ENCODE measurements at regions of chr5 and their contacts with region 1.

Region 1: DNA sequence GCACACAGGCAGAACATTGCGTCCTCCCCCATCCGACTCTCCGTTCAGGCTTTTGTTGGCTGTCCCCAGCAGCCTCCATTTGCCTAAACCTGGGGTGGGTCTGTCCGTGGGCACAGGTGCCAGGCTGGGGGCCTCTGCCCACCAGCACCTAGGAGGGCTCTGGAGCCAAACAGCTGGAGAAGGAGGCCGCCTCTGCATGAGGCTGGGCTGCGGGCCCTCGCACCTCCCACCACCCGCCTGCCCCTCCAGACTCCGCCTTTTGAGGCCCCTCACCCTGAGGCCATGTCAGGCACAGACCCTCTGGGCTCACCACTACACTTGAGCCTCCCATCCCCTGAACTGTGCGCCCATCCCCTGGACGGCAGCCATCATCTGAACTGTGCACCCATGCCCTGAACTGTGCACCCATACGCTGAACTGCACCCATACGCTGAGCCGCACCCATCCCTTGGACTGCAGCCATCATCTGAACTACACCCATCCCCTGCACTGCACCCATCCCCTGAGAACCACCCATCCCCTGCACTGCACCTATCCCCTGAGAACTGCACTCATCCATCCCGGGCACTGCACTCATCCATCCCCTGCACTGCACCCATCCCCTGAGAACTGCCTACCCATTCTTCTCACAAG is 98.0 kb upstream of the OTULINL start:
- DNase-seq: no peak

Region 2: GRCh38 chr5:12730354-12730753 is 1753.3 kb before region 1 on chr5:
- intact Hi-C with region 1: no loop called
- DNase-seq: no peak

Region 3: GRCh38 chr5:15664961-15665360 is 1181.3 kb after region 1 on chr5:
- intact Hi-C with region 1: loop called in 1 of 2 experiments (anchors 5 kb)
- DNase-seq: no peak

Region 4: GRCh38 chr5:16260000-16260399 is 1776.4 kb after region 1 on chr5:
- intact Hi-C with region 1: no loop called
- DNase-seq: no peak